Mucosa of descending colon (tissue), 3 donors: ENCODE measurements at regions of chr7 and their contacts with region 1.

Region 1: GRCh38 chr7:130909881-130910672 is 176.1 kb upstream of the KLF14 start:
- DNase-seq: no peak
- ATAC-seq: no peak
- H3K4me3 ChIP-seq: no peak overlapping the region
- H3K4me1 ChIP-seq: peaks cover 57% of the 10 kb centered on the region
- CTCF ChIP-seq: no peak

Region 2: DNA sequence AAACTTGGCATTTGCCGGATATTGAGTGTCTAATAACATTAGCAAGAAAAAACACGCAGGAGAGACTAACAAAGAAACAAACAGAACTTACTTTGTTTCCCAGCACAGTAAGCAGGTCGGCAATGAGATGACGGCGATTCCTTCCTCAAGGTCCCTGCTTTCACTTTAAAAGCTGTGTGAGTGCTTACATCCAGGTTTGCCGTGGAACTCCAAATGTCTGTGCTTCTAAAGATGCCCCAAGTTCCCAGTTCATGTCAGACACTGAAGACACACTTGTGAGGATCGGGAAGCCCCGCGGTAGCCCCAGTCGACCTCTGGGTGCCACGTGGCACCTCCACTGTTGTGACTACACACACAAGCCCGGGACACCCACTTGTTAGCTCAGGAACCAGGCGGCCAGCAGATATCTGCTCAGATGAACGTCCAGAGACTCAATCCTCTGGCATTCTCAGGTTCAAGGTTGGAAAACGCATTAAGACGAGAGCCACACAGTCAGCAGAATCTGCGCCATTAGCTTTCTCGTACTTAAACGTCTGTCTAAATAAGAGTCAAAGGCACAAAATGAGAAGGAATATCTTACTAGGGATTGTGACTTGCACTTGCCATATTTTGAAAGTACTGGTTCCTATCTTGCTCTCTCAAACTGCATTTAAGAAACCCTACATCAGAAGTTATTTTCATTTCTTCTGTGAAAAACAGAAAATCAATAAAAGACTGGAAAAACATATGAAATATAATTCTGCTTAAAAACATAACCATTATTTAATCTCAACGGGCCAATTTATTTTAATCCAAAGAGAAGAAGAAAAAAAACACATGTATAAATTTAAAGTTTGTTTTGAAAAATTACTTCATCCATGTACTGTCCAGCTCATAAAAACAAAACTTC is 31.5 kb after region 1 on chr7:
- intact Hi-C with region 1: loop called in 1 of 2 experiments (anchors 5 kb)
- DNase-seq: peak; percentile 77 to 79 (median 78)
- ATAC-seq: peak; percentile 71
- H3K4me3 ChIP-seq: peak overlapping the region; percentile 7
- H3K4me1 ChIP-seq: peaks cover 29% of the 10 kb centered on the region
- CTCF ChIP-seq: peak; percentile 9